ENCODE measurements at regions of chr1 and their contacts with region 1.

Region 1: DNA sequence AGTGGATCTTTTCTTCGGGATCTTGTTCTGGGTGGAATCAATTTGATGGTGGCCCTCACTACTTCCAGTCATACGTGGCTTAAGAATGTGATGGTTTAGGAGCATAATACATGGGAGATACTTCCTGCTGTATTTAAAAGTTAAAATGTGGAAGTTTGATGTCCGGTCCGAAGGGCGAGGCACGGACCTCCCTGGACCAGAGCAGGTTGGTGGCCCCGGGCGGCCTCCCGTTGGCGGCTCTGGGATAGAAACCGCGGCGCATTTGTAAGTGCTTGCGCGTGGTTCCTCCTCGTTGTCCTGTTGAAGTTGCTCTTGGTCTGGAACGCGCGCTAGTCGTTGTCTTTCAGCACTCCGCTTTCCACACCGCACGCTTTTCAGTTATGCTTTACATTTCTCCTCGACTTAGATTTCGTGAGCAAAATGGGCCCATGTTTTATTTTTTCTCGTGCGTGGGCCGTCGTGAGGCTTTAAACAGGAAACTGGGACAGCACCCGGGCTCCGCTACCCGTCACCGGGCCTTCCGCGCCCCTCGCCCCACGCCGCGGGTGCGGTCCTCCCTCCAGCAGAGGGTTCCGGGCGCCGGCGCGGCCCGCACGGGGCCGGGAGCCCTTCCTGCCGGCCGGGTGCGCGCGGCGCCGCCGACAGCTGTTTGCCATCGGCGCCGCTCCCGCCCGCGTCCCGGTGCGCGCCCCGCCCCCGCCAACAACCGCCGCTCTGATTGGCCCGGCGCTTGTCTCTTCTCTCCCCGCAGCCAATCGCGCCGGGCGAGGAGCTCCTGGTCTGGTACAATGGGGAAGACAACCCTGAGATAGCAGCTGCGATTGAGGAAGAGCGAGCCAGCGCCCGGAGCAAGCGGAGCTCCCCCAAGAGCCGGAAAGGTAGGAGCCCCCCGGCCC is 48.9 kb downstream of the PRDM2 start:
- DNase-seq: peak; percentile 61
- ATAC-seq: peak; percentile 87
- H3K4me3 ChIP-seq: peak overlapping the region; percentile 60
- H3K27ac ChIP-seq: peak overlapping the region; percentile 72
- H3K4me1 ChIP-seq: peaks cover 13% of the 10 kb centered on the region
- H3K27me3 ChIP-seq: no peaks in the 10 kb centered on the region
- CTCF ChIP-seq: peak in 2 of 3 experiments; percentile 0 to 18; a peak in 1 of 6 replicates
- EP300 ChIP-seq: no peak
- POLR2A ChIP-seq: peak; percentile 90
- RAD21 ChIP-seq: no peak

Region 2: DNA sequence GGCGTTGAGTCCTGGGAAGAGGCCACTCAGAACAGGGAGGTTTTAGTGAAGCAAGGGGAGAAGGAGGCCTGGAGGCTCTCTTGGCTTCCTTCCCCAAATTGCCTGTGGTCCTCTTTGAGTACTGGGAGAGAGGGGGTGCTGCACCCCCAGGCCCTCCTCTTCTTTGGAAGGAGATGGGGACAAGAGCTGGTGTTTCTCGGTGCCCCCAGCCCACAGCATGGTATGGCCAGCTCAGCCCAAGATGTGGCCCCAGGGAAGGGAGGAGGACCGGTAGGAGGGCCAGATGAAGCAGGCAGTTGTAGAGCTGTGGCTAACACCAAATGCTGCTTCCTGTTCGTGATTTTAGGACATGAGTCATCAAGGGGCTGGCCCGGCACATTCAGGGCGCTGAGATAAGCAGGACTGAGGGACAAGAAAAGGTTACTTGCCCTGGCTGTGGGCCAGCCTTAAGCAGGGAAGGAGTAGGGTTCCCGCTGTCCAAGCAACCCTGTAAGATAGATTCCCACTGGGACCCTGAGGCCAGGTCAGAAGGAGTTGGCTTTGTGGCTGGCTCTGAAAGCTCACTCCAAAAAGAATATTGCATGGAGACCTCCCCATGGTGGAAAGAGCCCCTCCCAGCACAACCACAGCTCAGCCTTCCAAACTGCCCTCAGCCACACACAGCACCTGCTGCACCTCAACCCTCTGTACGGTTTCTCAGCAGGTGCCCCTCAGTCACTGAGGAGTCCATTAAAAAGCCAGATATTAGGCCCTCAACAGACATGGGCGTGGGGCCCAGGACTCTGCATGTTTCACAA is 1587.0 kb before region 1 on chr1:
- CTCF ChIA-PET with region 1: no interaction called
- POLR2A ChIA-PET with region 1: no interaction called
- RAD21 ChIA-PET with region 1: no interaction called
- SMC1A ChIA-PET with region 1: no interaction called
- in situ Hi-C with region 1: loop called (anchors 25 kb)
- intact Hi-C with region 1: no loop called
- DNase-seq: peak; percentile 88
- ATAC-seq: peak; percentile 87
- H3K4me3 ChIP-seq: no peak overlapping the region
- H3K27ac ChIP-seq: peak overlapping the region; percentile 89
- H3K4me1 ChIP-seq: peaks cover 79% of the 10 kb centered on the region
- H3K27me3 ChIP-seq: no peaks in the 10 kb centered on the region
- CTCF ChIP-seq: no peak
- EP300 ChIP-seq: peak; percentile 77 to 88; a peak in 3 of 4 replicates
- POLR2A ChIP-seq: peak; percentile 69
- RAD21 ChIP-seq: no peak

Region 3: GRCh38 chr1:13487143-13487868 is 261.6 kb before region 1 on chr1:
- CTCF ChIA-PET with region 1: no interaction called
- POLR2A ChIA-PET with region 1: no interaction called
- RAD21 ChIA-PET with region 1: no interaction called
- SMC1A ChIA-PET with region 1: no interaction called
- in situ Hi-C with region 1: no loop called
- intact Hi-C with region 1: no loop called
- DNase-seq: no peak
- ATAC-seq: no peak
- H3K4me3 ChIP-seq: no peak overlapping the region
- H3K27ac ChIP-seq: no peak overlapping the region
- H3K4me1 ChIP-seq: no peaks in the 10 kb centered on the region
- H3K27me3 ChIP-seq: peaks cover 0 to 3% of the 10 kb centered on the region in 2 experiments; a peak in 2 of 4 replicates
- CTCF ChIP-seq: no peak
- EP300 ChIP-seq: no peak
- POLR2A ChIP-seq: no peak
- RAD21 ChIP-seq: no peak

Region 4: GRCh38 chr1:13730751-13731482 is 17.9 kb before region 1 on chr1:
- CTCF ChIA-PET with region 1: interaction called, 36 read pairs
- POLR2A ChIA-PET with region 1: interaction called, 11 read pairs
- RAD21 ChIA-PET with region 1: interaction called, 28 read pairs
- SMC1A ChIA-PET with region 1: interaction called, 18 read pairs
- in situ Hi-C with region 1: no loop called
- intact Hi-C with region 1: loop called (anchors 2 kb)
- DNase-seq: peak; percentile 94
- ATAC-seq: peak; percentile 93
- H3K4me3 ChIP-seq: peak overlapping the region; percentile 54
- H3K27ac ChIP-seq: peak overlapping the region; percentile 98
- H3K4me1 ChIP-seq: peaks cover 56% of the 10 kb centered on the region
- H3K27me3 ChIP-seq: no peaks in the 10 kb centered on the region
- CTCF ChIP-seq: 0 out of 6 replicates have a peak, but pooled peaks of 2 of the 3 experiments have one; percentile 17 to 19
- EP300 ChIP-seq: peak; percentile 61 to 87; a peak in 2 of 4 replicates
- POLR2A ChIP-seq: peak; percentile 81
- RAD21 ChIP-seq: no peak

Region 5: DNA sequence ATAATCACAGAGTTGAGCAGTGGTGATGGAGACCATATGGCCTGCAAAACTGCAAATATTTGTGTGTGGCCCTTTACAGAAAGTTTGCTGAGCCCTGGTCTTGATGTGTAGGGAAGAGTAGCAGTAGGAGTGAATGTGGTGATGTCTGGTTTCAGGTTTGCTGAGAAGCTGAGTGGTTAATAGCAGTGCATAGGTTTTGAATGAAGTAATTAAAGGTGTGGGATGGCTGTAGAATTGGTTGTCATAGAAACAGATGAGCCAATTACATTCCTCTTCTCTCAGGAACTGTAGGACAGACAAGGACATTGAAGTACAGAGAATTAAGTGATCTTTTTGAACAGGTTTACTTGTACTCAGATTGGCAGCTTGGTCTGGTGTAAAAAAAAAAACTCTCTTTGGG is 11.5 kb before region 1 on chr1:
- CTCF ChIA-PET with region 1: interaction called, 6 read pairs
- POLR2A ChIA-PET with region 1: interaction called, 11 read pairs
- RAD21 ChIA-PET with region 1: interaction called, 28 read pairs
- SMC1A ChIA-PET with region 1: interaction called, 18 read pairs
- in situ Hi-C with region 1: no loop called
- intact Hi-C with region 1: no loop called
- DNase-seq: no peak
- ATAC-seq: peak; percentile 66
- H3K4me3 ChIP-seq: no peak overlapping the region
- H3K27ac ChIP-seq: no peak overlapping the region
- H3K4me1 ChIP-seq: peaks cover 10% of the 10 kb centered on the region
- H3K27me3 ChIP-seq: no peaks in the 10 kb centered on the region
- CTCF ChIP-seq: no peak
- EP300 ChIP-seq: no peak
- POLR2A ChIP-seq: no peak
- RAD21 ChIP-seq: no peak

Region 6: DNA sequence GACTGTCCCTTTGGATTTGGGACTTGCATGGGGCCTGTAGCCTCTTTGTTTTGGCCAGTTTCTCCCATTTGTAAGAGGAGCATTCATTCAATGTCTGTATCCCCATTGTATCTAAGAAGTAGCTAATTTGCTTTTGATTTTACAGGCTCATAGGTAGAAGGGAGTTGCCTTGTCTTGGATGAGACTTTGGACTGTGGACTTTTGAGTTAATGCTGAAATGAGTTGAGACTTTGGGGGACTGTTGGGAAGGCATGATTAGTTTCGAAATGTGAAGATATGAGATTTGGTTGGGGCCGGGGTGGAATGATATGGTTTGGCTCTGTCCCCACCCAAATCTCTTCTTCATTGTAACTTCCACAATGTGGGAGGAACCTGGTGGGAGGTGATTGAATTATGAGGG is 102.9 kb after region 1 on chr1:
- CTCF ChIA-PET with region 1: no interaction called
- POLR2A ChIA-PET with region 1: no interaction called
- RAD21 ChIA-PET with region 1: no interaction called
- SMC1A ChIA-PET with region 1: no interaction called
- in situ Hi-C with region 1: no loop called
- intact Hi-C with region 1: no loop called
- DNase-seq: no peak
- ATAC-seq: no peak
- H3K4me3 ChIP-seq: no peak overlapping the region
- H3K27ac ChIP-seq: no peak overlapping the region
- H3K4me1 ChIP-seq: no peaks in the 10 kb centered on the region
- H3K27me3 ChIP-seq: no peaks in the 10 kb centered on the region
- CTCF ChIP-seq: no peak
- EP300 ChIP-seq: no peak
- POLR2A ChIP-seq: no peak
- RAD21 ChIP-seq: no peak